AG04449 (cell line): ENCODE measurements at regions of chr1 and their contacts with region 1.

Region 1: GRCh38 chr1:226407497-226408284 is at the start of gene PARP1:
- DNase-seq: no peak
- H3K4me3 ChIP-seq: peak within 1 kb of the TSS; percentile 76
- CTCF ChIP-seq: peak; percentile 36

Region 2: DNA sequence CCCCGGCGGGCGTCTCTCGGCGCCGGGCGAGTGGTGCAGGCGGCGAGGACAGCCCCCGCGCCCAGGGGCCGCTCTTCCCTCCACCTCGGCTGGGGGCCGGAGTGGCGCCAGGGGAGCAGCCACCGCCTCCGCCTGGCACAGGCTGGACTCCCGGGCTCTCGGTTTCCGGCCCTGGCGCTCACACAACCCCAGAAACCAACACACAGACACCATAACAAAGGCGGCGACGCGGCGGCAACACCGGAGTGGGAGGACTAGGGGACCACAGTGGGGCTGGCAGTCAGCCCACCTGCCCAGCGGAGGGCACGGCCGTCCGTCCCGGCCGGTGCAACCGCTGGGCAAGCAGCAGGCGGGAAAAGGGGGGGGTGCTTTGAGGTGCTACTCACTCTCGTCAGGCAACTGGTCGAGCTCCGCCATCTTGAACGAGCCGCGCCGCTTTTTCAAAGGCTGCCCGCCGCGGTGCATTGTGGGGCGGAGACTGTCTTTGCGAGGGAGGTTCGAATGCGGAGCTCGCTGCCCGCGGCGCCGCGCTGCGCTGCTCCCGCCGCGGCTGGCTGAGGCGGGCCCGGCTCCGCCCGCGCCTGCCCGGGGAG is 98.9 kb before region 1 on chr1 and contains the start of gene LIN9:
- CTCF ChIA-PET with region 1: interaction called, 10 read pairs
- POLR2A ChIA-PET with region 1: interaction called, 7 read pairs
- DNase-seq: peak; percentile 33
- H3K4me3 ChIP-seq: peak within 1 kb of the TSS; percentile 95
- CTCF ChIP-seq: peak; percentile 4

Region 3: GRCh38 chr1:226355669-226356551 is 51.8 kb before region 1 on chr1:
- CTCF ChIA-PET with region 1: no interaction called
- POLR2A ChIA-PET with region 1: no interaction called
- DNase-seq: no peak
- H3K4me3 ChIP-seq: no peak overlapping the region
- CTCF ChIP-seq: no peak

Region 4: DNA sequence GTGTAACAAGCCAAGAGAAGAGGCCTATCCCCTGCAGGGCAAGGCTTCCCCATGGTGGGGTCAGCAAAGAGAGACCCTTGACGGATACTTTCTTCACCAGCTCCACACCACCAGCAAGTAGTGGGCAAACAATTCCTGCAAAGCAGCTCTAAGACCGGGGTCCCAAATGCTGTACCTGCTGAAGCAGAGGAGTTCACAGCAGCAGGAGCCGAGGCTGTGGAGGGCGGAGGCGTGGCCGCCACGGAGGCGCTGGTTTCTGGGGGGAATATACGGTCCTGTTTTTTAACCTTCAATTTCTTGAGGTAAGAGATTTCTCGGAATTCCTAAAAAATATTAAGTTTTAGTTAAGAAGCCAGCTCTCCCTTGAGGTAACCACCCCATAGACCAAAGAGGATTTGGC is 24.8 kb before region 1 on chr1:
- CTCF ChIA-PET with region 1: interaction called, 12 read pairs
- POLR2A ChIA-PET with region 1: no interaction called
- DNase-seq: no peak
- H3K4me3 ChIP-seq: no peak overlapping the region
- CTCF ChIP-seq: no peak

Region 5: GRCh38 chr1:226397011-226397926 is 10.4 kb before region 1 on chr1:
- CTCF ChIA-PET with region 1: interaction called, 31 read pairs
- POLR2A ChIA-PET with region 1: no interaction called
- DNase-seq: no peak
- H3K4me3 ChIP-seq: no peak overlapping the region
- CTCF ChIP-seq: no peak

Region 6: GRCh38 chr1:226444901-226445300 is 37.2 kb after region 1 on chr1:
- CTCF ChIA-PET with region 1: interaction called, 14 read pairs
- POLR2A ChIA-PET with region 1: no interaction called
- DNase-seq: no peak
- H3K4me3 ChIP-seq: no peak overlapping the region
- CTCF ChIP-seq: no peak